ENCODE measurements at regions of chr15 and their contacts with region 1.

Region 1: DNA sequence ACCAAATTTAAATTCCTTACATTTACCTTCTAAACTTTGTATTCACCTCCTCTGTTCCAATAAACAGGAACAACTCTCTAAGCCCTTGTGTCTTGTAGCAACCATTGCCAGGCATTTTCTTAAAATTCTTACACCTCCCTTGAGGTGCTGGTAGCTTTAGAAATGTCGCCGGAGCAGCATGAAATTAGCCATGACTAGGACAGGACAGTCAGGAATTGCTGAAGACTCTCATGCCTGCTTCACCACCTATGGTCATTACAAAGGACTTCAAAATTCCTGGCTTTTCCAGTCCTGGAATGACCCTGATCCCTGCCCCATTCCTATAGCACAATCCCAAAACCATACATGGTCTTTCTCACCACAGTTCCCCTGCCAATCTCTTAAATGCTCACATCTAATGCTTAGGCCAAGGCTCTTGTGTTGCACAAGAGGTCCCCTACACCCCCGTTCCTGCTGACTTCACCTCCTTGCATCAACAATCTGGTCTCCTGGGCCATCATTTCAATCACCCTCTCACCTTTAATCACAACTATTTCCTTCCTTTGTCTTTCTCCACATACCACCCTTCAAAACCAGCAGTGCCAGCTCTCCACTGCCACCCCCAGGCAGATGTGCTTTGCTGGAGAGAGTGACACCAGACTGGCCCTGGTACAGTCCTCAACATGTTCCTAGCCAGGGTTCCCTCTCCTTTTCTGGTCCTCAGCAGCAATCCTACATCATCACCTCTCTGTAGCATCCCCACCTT is 113.2 kb upstream of the TJP1 start:
- DNase-seq: peak in 1 of 2 experiments; percentile 55
- H3K4me3 ChIP-seq: no peak overlapping the region
- H3K27ac ChIP-seq: peak overlapping the region; percentile 81
- H3K4me1 ChIP-seq: peaks cover 68% of the 10 kb centered on the region
- H3K27me3 ChIP-seq: no peaks in the 10 kb centered on the region
- CTCF ChIP-seq: peak; percentile 41; the same call in 1 of the 2 replicates

Region 2: GRCh38 chr15:29821416-29822131 is 113.9 kb before region 1 on chr15:
- CTCF ChIA-PET with region 1: no interaction called
- POLR2A ChIA-PET with region 1: interaction called, 3 read pairs
- intact Hi-C with region 1: loop called (anchors 1 kb)
- DNase-seq: peak; percentile 83 to 85
- H3K4me3 ChIP-seq: peak overlapping the region; percentile 74
- H3K27ac ChIP-seq: peak overlapping the region; percentile 95
- H3K4me1 ChIP-seq: peaks cover 26% of the 10 kb centered on the region
- H3K27me3 ChIP-seq: no peaks in the 10 kb centered on the region
- CTCF ChIP-seq: 0 out of 2 replicates have a peak, but pooled peaks have one; percentile 11

Measured in PC-9 (cell line).